ENCODE measurements at regions of chr11 and their contacts with region 1.

Region 1: GRCh38 chr11:119018074-119018938 is at the starts of genes RPS25 and TRAPPC4:
- DNase-seq: peak; percentile 87 to 98 (median 96)
- ATAC-seq: peak; percentile 93
- H3K4me3 ChIP-seq: peak within 1 kb of the TSS; percentile 89
- H3K4me3 Mint-ChIP-seq: peak within 1 kb of the TSS; percentile 96 to 100 (median 98)
- H3K27ac ChIP-seq: peak within 1 kb of the TSS; percentile 98
- H3K27ac Mint-ChIP-seq: peak within 1 kb of the TSS; percentile 99 to 100 (median 100)
- H3K4me1 ChIP-seq: peaks cover 30 to 32% of the 10 kb centered on the region in 2 donors
- H3K4me1 Mint-ChIP-seq: peaks cover 21 to 75% (median 50%) of the 10 kb centered on the region in 7 donors
- H3K27me3 ChIP-seq: no peaks in the 10 kb centered on the region
- H3K27me3 Mint-ChIP-seq: no peaks in the 10 kb centered on the region
- total RNA-seq, gene RPS25: 1,535 to 3,042 (median 2,772) TPM
- total RNA-seq, gene TRAPPC4: 70.7 to 80.3 (median 77.8) TPM

Region 2: GRCh38 chr11:118997627-118998387 is 20.5 kb before region 1 on chr11 and contains the start of gene CENATAC:
- CTCF ChIA-PET with region 1: interaction called, 7 read pairs
- POLR2A ChIA-PET with region 1: interaction called, 69 read pairs
- intact Hi-C with region 1: loop called (anchors 1 kb)
- DNase-seq: peak; percentile 91 to 98 (median 94)
- ATAC-seq: peak; percentile 98
- H3K4me3 ChIP-seq: peak within 1 kb of the TSS; percentile 91
- H3K4me3 Mint-ChIP-seq: peak within 1 kb of the TSS; percentile 87 to 99 (median 94)
- H3K27ac ChIP-seq: peak within 1 kb of the TSS; percentile 85
- H3K27ac Mint-ChIP-seq: peak within 1 kb of the TSS; percentile 87 to 98 (median 92)
- H3K4me1 ChIP-seq: peaks cover 6 to 16% of the 10 kb centered on the region in 2 donors
- H3K4me1 Mint-ChIP-seq: peaks cover 26 to 45% (median 37%) of the 10 kb centered on the region in 7 donors
- H3K27me3 ChIP-seq: no peaks in the 10 kb centered on the region
- H3K27me3 Mint-ChIP-seq: no peaks in the 10 kb centered on the region
- total RNA-seq, gene CENATAC: 53.5 to 136 (median 109) TPM

Region 3: DNA sequence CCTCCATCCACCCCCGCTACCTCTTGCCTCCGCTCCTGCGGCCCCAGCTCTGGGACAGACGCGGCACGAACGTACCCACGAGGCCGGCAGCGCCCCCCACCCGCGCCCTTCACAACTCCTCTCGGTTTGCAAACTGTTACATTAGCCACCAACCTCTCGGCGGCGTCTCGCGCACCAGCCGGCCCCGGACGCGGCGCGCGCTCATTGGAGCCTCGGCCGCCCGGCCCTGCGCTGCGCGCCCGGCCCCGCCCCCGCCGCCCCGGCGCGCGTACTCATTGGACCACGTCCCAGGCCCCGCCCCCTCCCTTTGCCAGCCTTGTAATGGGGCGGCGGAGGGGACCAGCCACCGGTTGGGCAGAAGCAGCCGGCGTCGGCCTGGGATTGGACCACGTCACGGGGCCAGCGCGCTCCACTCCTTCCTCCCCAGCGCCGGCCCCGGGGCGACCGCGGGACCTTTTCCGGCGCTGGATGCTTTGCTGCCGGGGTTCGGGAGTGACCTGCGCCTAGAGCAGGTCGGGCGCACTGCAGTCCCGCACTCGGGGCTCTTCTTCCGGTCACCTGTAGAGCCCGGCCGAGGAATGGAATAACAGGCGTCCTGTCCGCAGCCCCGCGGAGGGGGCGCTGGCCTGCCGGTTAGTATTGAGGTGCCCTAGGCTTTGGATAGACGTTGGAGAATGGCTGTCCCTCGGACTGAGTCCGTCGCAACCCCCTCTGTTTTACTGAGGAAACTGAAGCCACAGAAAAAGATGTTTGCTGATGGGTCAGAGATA is 38.9 kb after region 1 on chr11 and contains the start of gene HYOU1:
- CTCF ChIA-PET with region 1: no interaction called
- POLR2A ChIA-PET with region 1: interaction called, 12 read pairs
- intact Hi-C with region 1: loop called (anchors 1 kb)
- DNase-seq: peak; percentile 97 to 98 (median 98)
- ATAC-seq: peak; percentile 98
- H3K4me3 ChIP-seq: peak within 1 kb of the TSS; percentile 73
- H3K4me3 Mint-ChIP-seq: peak within 1 kb of the TSS; percentile 90 to 99 (median 95)
- H3K27ac ChIP-seq: peak within 1 kb of the TSS; percentile 96
- H3K27ac Mint-ChIP-seq: peak within 1 kb of the TSS; percentile 86 to 99 (median 95)
- H3K4me1 ChIP-seq: peaks cover 18 to 20% of the 10 kb centered on the region in 2 donors
- H3K4me1 Mint-ChIP-seq: peaks cover 22 to 44% (median 35%) of the 10 kb centered on the region in 7 donors
- H3K27me3 ChIP-seq: no peaks in the 10 kb centered on the region
- H3K27me3 Mint-ChIP-seq: no peaks in the 10 kb centered on the region
- total RNA-seq, gene HYOU1: 77.8 to 198 (median 110) TPM

Region 4: DNA sequence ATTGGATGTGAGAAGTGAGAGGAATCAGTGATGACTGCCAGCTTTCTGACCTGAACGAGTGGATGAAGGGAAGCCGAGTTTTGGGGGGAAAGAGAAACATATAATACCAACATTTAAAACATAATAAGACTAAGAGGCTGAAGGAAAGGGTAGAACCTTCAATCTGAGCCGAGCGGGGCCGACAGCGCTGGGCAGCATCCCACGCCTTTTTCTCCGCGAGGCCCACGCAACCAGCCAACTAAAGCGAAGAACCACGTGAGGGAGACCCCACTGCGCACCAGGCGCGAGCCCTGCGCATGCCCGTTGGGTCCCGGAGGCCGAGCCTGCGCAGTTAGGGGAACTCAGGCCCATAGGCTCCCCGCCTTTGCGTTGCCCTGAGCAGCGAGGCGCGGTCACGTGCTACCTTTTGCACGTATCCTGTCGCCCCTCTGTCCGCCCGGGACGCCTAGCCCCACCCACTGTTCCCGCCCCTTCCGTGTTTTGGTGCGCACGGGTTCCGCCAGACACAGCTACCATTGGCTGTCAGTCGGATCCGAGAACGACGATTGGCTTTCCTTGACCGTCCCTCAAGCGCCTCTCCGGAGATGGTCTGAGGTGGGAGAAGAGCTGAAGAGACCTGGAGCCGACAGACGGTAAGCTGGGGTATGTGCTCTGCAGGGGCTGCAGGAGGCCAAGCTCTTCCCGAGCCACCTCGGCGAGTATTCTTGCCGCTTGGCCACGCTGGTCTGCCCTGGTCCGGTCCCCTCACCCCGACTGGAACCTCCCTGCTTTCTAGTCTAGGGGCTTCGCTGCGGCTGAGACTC is 102.9 kb after region 1 on chr11 and contains the start of gene HINFP:
- CTCF ChIA-PET with region 1: no interaction called
- POLR2A ChIA-PET with region 1: interaction called, 8 read pairs
- intact Hi-C with region 1: loop called (anchors 1 kb)
- DNase-seq: peak; percentile 92 to 100 (median 98)
- ATAC-seq: peak; percentile 99
- H3K4me3 ChIP-seq: peak within 1 kb of the TSS; percentile 71
- H3K4me3 Mint-ChIP-seq: peak within 1 kb of the TSS; percentile 86 to 98 (median 94)
- H3K27ac ChIP-seq: peak within 1 kb of the TSS; percentile 85
- H3K27ac Mint-ChIP-seq: peak within 1 kb of the TSS; percentile 78 to 98 (median 95)
- H3K4me1 ChIP-seq: peaks cover 17 to 23% of the 10 kb centered on the region in 2 donors
- H3K4me1 Mint-ChIP-seq: peaks cover 34 to 58% (median 50%) of the 10 kb centered on the region in 7 donors
- H3K27me3 ChIP-seq: no peaks in the 10 kb centered on the region
- H3K27me3 Mint-ChIP-seq: no peaks in the 10 kb centered on the region
- total RNA-seq, gene HINFP: 30.7 to 79.7 (median 42.7) TPM

Region 5: GRCh38 chr11:119334174-119334930 is 316.0 kb after region 1 on chr11 and contains the start of gene RNF26:
- CTCF ChIA-PET with region 1: no interaction called
- POLR2A ChIA-PET with region 1: no interaction called
- intact Hi-C with region 1: loop called in 1 of 2 experiments (anchors 2 kb)
- DNase-seq: peak; percentile 82 to 96 (median 94)
- ATAC-seq: peak; percentile 98
- H3K4me3 ChIP-seq: peak within 1 kb of the TSS; percentile 60
- H3K4me3 Mint-ChIP-seq: peak within 1 kb of the TSS; percentile 88 to 99 (median 98)
- H3K27ac ChIP-seq: peak within 1 kb of the TSS; percentile 89
- H3K27ac Mint-ChIP-seq: peak within 1 kb of the TSS; percentile 91 to 99 (median 97)
- H3K4me1 ChIP-seq: peaks cover 10 to 12% of the 10 kb centered on the region in 2 donors
- H3K4me1 Mint-ChIP-seq: peaks cover 22 to 59% (median 41%) of the 10 kb centered on the region in 7 donors
- H3K27me3 ChIP-seq: peaks cover 4 to 9% of the 10 kb centered on the region in 2 donors
- H3K27me3 Mint-ChIP-seq: peaks cover 9 to 30% (median 19%) of the 10 kb centered on the region in 5 donors
- total RNA-seq, gene RNF26: 16.9 to 28.3 (median 18.9) TPM

Region 6: DNA sequence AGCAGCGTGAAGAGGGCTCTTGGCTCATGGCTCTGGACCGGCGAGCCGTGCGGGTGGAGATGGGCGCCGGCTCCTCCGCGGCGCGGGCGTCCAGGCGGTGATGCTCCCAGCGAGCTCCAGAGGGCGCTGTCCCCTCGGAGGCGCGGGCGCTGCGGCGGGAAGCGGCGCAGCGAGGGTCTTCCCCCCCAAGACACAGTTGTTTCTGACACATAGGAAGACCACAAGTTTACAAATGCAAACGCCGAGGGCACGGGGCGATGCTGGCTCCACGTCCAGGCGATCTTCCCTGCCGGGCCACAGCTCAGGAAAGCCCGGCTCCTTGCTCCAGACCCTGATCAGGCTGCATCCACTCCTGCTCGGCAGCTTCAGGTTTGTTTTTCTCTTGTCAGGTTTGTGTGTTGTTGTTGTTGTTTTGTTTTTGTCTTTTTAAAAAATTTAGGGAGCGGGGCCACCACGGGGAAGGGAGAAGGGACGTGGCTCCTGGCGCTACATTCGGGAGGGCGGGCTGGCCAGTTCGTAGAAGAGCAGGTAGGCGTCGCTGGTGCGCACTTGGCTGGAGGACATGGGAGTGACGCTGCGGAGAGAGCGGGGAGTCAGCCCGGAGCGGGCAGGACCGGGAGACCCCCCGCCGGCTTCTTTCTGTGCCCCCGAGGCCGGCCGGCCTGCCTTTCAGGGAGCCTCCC is 338.2 kb after region 1 on chr11:
- CTCF ChIA-PET with region 1: no interaction called
- POLR2A ChIA-PET with region 1: no interaction called
- intact Hi-C with region 1: no loop called
- DNase-seq: peak; percentile 49 to 82 (median 70)
- ATAC-seq: peak; percentile 94
- H3K4me3 ChIP-seq: peak overlapping the region; percentile 82
- H3K4me3 Mint-ChIP-seq: peak overlapping the region; percentile 81 to 96 (median 93)
- H3K27ac ChIP-seq: peak overlapping the region; percentile 48
- H3K27ac Mint-ChIP-seq: peak overlapping the region in 7 of 9 donors; percentile 38 to 93 (median 68)
- H3K4me1 ChIP-seq: no peaks in the 10 kb centered on the region
- H3K4me1 Mint-ChIP-seq: peaks cover 0 to 16% (median 5%) of the 10 kb centered on the region in 7 donors
- H3K27me3 ChIP-seq: no peaks in the 10 kb centered on the region
- H3K27me3 Mint-ChIP-seq: peaks cover 12 to 59% (median 29%) of the 10 kb centered on the region in 5 donors